Aorta (tissue), 5 donors: ENCODE measurements at regions of chr5 and their contacts with region 1.

Region 1: DNA sequence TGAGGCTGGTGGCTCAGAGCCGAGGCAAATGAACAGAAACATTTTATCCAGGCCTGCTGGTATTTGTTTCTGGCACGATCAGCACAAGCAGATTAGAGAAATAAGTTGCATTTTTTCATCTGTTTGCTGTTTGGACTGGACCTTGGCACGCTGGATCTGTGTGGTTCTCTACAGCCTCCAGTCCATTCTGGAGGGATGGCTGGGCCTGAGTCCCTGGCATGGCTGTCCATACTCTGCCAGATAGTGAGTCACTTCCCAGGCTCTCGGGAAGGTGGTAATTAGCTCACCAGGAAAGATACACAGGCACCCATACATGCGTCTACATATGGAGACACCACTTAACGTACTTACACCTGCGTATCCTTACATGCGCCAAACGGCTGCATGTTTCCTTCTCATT is 78.6 kb downstream of the SPRY4 start:
- DNase-seq: peak; percentile 83 to 88
- ATAC-seq: peak; percentile 82
- H3K4me3 ChIP-seq: no peak overlapping the region
- H3K27ac ChIP-seq: peak overlapping the region; percentile 87 to 94
- H3K4me1 ChIP-seq: peaks cover 2 to 9% of the 10 kb centered on the region in 2 donors
- H3K27me3 ChIP-seq: no peaks in the 10 kb centered on the region

Region 2: DNA sequence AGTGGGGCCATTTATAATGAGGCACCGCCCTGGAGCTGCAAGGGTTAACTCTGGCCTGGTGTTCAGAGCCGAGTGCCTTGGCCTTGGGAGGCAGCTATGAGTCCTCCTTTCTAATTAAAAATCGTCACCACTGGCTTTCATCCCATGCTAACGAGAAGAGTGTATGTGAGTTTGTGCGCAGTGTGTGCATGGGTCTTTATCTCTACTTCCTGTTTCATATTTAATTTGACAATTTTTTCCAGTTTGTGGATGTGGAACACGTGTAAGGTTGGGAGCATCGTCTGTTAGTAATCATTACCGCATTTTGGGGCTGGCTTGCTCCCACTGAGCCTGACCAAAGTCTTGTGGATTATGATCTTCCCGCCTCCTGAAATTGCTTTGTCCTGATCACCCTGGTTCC is 61.3 kb before region 1 on chr5:
- intact Hi-C with region 1: no loop called
- DNase-seq: peak; percentile 17 to 20
- ATAC-seq: no peak
- H3K4me3 ChIP-seq: no peak overlapping the region
- H3K27ac ChIP-seq: no peak overlapping the region
- H3K4me1 ChIP-seq: peaks cover 0 to 2% of the 10 kb centered on the region in 2 donors
- H3K27me3 ChIP-seq: no peaks in the 10 kb centered on the region

Region 3: GRCh38 chr5:142197098-142197497 is 49.2 kb before region 1 on chr5:
- intact Hi-C with region 1: loop called in 1 of 2 experiments (anchors 2 kb)
- DNase-seq: no peak
- ATAC-seq: no peak
- H3K4me3 ChIP-seq: no peak overlapping the region
- H3K27ac ChIP-seq: no peak overlapping the region
- H3K4me1 ChIP-seq: no peaks in the 10 kb centered on the region
- H3K27me3 ChIP-seq: no peaks in the 10 kb centered on the region

Region 4: DNA sequence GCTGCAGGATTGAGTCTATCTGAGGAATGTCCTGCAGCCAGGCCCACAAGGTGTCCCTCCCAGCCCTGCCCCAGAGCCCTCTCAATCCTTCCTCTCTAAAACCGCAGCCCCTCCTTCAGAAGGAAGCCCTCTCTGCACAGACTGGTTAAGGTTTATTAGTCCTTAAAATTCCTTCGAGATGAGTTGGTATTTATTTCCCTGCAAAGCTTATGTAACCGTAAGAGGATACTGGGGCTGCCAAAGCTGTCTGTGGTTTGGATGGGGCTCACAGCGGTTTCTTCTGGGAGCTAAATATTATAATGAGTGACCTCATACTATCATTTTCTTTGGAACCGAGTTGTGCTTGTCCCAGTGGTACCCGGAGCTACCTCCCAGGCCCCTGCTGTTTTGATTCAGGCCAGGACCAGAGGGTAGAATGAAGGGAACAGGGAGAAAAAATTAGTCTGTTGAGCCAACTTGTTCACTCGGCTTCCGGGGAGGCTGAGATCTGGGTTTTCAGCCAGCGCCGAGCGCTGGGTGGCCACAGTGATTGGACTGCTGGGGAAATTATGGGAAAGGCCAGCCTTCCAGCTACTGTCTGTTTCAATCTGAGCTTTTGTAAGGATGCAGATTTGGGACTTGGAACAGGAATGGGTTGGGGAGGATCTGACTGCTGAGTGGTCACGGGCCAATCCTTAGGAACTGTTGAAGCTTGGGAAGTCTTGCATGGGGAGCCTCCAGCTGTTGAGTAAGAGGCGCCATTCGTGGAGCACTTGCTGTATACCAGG is 30.2 kb before region 1 on chr5:
- intact Hi-C with region 1: loop called in 1 of 2 experiments (anchors 2 kb)
- DNase-seq: peak; percentile 88 to 89
- ATAC-seq: peak; percentile 91
- H3K4me3 ChIP-seq: no peak overlapping the region
- H3K27ac ChIP-seq: peak overlapping the region; percentile 50 to 87
- H3K4me1 ChIP-seq: peaks cover 4 to 8% of the 10 kb centered on the region in 2 donors
- H3K27me3 ChIP-seq: no peaks in the 10 kb centered on the region

Region 5: GRCh38 chr5:142296914-142297417 is 50.7 kb after region 1 on chr5:
- intact Hi-C with region 1: loop called in 1 of 2 experiments (anchors 1 kb)
- DNase-seq: peak; percentile 75 to 82
- ATAC-seq: peak; percentile 68
- H3K4me3 ChIP-seq: no peak overlapping the region
- H3K27ac ChIP-seq: peak overlapping the region; percentile 91 to 94
- H3K4me1 ChIP-seq: no peaks in the 10 kb centered on the region
- H3K27me3 ChIP-seq: no peaks in the 10 kb centered on the region

Region 6: GRCh38 chr5:142324871-142325724 is 78.8 kb after region 1 on chr5 and contains the start of gene SPRY4:
- intact Hi-C with region 1: loop called in 1 of 2 experiments (anchors 2 kb)
- DNase-seq: peak; percentile 95 to 98
- ATAC-seq: peak; percentile 91
- H3K4me3 ChIP-seq: peak within 1 kb of the TSS; percentile 72 to 90
- H3K27ac ChIP-seq: peak within 1 kb of the TSS; percentile 85 to 99
- H3K4me1 ChIP-seq: peaks cover 0 to 11% of the 10 kb centered on the region in 2 donors
- H3K27me3 ChIP-seq: no peaks in the 10 kb centered on the region
- total RNA-seq, gene SPRY4: 49.8 to 67.9 TPM

Region 7: GRCh38 chr5:142356716-142357473 is 110.6 kb after region 1 on chr5:
- intact Hi-C with region 1: loop called in 1 of 2 experiments (anchors 2 kb)
- DNase-seq: peak; percentile 92 to 94
- ATAC-seq: peak; percentile 90
- H3K4me3 ChIP-seq: peak overlapping the region; percentile 57 to 92
- H3K27ac ChIP-seq: peak overlapping the region; percentile 92 to 97
- H3K4me1 ChIP-seq: no peaks in the 10 kb centered on the region
- H3K27me3 ChIP-seq: no peaks in the 10 kb centered on the region